CD4-positive, alpha-beta T cell (primary cell): ENCODE measurements at regions of chr6 and their contacts with region 1.

Region 1: GRCh38 chr6:125153391-125154117 is at the start of gene TPD52L1:
- DNase-seq: peak; percentile 24 to 77 (median 46)
- ATAC-seq: peak; percentile 84
- H3K4me3 ChIP-seq: peak within 1 kb of the TSS; percentile 60
- H3K4me3 Mint-ChIP-seq: peak within 1 kb of the TSS; percentile 84
- H3K27ac ChIP-seq: no peak within 1 kb of the TSS
- H3K27ac Mint-ChIP-seq: no peak within 1 kb of the TSS
- H3K4me1 ChIP-seq: peaks cover 16% of the 10 kb centered on the region
- H3K4me1 Mint-ChIP-seq: peaks cover 6% of the 10 kb centered on the region
- H3K27me3 ChIP-seq: peaks cover 4 to 30% of the 10 kb centered on the region in 2 experiments
- H3K27me3 Mint-ChIP-seq: peaks cover 68% of the 10 kb centered on the region
- CTCF ChIP-seq: peak; percentile 75
- total RNA-seq, gene TPD52L1: not detected

Region 2: DNA sequence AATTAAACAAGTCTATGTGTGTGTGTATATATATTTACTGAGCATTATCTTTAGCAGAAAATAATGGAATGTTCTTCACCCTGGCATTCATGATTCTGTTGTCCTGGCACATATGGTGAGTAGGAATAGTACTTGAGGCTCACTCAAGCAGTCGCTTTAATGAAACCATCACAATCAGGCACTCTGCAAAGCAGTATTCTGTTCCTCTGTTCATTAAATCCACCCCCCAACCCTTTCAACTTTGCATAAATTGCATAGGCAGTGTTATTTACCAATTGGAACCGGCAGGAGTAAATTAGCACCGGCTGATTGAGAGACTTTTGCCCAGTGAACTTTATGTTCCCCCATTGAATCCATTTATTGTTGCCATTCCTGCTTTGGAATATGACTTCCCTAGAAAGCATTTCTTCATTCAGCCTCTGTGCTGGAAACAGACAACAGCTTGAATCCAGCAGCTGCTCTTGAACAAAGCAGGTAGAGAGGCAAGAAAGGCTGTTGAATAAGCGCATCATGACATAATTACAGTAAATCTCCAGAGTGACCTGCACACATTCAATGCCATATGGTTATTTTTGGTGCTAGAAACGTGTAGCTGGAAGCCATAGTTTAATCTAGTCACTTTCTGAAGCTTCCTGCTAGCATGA is 459.3 kb before region 1 on chr6:
- CTCF ChIA-PET with region 1: no interaction called
- POLR2A ChIA-PET with region 1: no interaction called
- intact Hi-C with region 1: no loop called
- DNase-seq: no peak
- ATAC-seq: no peak
- H3K4me3 ChIP-seq: no peak overlapping the region
- H3K4me3 Mint-ChIP-seq: no peak overlapping the region
- H3K27ac ChIP-seq: no peak overlapping the region
- H3K27ac Mint-ChIP-seq: no peak overlapping the region
- H3K4me1 ChIP-seq: no peaks in the 10 kb centered on the region
- H3K4me1 Mint-ChIP-seq: no peaks in the 10 kb centered on the region
- H3K27me3 ChIP-seq: no peaks in the 10 kb centered on the region
- H3K27me3 Mint-ChIP-seq: no peaks in the 10 kb centered on the region
- CTCF ChIP-seq: no peak

Region 3: GRCh38 chr6:125363039-125363823 is 209.7 kb after region 1 on chr6:
- CTCF ChIA-PET with region 1: no interaction called
- POLR2A ChIA-PET with region 1: no interaction called
- intact Hi-C with region 1: no loop called
- DNase-seq: no peak
- ATAC-seq: no peak
- H3K4me3 ChIP-seq: no peak overlapping the region
- H3K4me3 Mint-ChIP-seq: no peak overlapping the region
- H3K27ac ChIP-seq: no peak overlapping the region
- H3K27ac Mint-ChIP-seq: no peak overlapping the region
- H3K4me1 ChIP-seq: peaks cover 7% of the 10 kb centered on the region
- H3K4me1 Mint-ChIP-seq: peaks cover 5% of the 10 kb centered on the region
- H3K27me3 ChIP-seq: peaks cover 17 to 39% of the 10 kb centered on the region in 2 experiments
- H3K27me3 Mint-ChIP-seq: peaks cover 69% of the 10 kb centered on the region
- CTCF ChIP-seq: no peak

Region 4: DNA sequence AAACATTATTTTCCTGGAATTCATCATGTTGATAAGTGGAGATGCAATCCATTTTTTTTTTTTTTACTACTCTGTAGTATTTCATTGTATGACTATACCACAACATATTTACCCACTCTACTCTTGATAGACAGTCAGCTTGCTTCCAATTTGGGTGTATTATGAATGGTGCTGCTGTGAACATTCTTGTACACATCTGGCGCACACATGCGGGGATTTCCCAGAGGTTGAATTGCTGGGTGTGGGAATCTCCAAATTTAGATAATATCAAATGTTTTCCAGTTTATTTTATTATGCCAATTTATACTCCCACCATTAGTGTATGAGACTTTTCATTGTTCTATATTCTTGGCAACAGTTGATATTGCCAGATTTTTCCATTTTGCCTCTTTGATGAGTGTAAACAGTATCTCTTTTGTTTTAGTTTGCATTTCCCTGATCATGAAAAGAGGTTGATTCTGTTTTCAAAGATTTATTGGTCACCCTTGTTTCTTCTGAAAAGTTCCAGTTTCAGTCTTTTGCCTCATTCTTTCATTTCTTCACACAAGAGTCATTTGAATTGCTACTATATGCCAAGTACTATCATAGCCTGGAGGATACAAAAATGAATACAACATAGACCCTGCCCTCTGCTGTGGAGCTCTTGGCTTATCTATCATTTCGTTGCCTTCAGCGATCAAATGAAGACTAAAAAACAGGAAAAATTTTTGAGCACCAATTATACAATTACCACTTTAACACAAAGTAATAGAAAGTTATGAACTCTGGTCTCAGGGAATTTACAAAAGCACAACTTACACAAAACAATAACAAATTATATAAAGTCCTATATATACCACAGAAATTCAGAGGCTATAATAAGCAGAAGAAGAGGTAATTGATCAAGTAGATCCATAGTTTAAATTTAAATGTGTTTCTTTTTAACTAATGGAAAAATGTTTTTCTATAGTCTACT is 620.1 kb after region 1 on chr6:
- CTCF ChIA-PET with region 1: no interaction called
- POLR2A ChIA-PET with region 1: no interaction called
- intact Hi-C with region 1: loop called in 1 of 2 experiments (anchors 2 kb)
- DNase-seq: no peak
- ATAC-seq: no peak
- H3K4me3 ChIP-seq: no peak overlapping the region
- H3K4me3 Mint-ChIP-seq: no peak overlapping the region
- H3K27ac ChIP-seq: no peak overlapping the region
- H3K27ac Mint-ChIP-seq: no peak overlapping the region
- H3K4me1 ChIP-seq: no peaks in the 10 kb centered on the region
- H3K4me1 Mint-ChIP-seq: peaks cover 7% of the 10 kb centered on the region
- H3K27me3 ChIP-seq: no peaks in the 10 kb centered on the region
- H3K27me3 Mint-ChIP-seq: peaks cover 4% of the 10 kb centered on the region
- CTCF ChIP-seq: no peak